PC-3 (cell line): ENCODE measurements at regions of chr22 and their contacts with region 1.

Region 1: DNA sequence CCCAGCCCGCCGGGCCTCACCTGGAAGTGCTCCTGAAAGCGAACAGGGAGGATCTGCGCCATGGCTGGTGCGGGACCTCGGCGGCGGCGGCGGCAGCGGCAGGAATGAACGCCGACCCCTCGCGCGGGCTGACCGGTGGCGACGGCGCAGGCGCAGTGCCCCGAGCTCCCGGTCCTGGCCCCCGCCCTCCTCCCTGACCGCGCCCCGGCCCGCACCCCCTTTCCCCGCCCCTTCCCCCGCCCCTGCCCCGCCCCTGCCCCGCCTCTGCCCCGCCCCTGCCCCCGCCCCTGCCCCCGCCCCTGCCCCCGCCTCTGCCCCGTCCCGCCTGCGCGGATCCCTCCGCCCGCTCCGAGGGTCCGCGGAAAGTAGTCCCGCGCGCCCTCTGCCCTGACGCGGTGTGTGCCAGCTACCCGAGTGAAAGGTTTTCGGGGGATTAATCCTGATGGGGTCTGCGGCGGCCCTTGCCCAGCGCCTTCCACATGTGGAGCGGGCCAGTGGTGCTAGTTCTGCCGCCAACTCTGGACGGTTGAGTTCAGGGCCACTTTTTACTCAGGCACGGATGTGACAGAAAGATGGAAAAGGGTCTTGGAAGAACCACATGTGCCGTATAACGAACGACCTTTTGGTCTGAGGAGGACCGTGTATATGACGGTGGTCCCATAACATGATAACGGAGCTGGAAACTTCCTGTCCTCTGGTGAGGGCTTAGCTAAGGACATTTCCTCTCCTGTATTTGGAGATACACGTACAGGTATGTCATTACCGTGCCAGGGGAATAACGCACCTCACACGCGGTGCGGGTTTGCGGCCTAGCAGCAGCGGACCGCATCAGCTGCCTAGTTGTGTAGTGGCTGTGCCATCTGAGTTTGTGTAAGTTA is at the start of gene CLTCL1:
- DNase-seq: peak; percentile 48
- ATAC-seq: peak; percentile 33
- H3K4me3 ChIP-seq: peak within 1 kb of the TSS; percentile 90
- H3K27ac ChIP-seq: no peak within 1 kb of the TSS; the same call in 1 of the 2 replicates
- H3K4me1 ChIP-seq: peaks cover 46% of the 10 kb centered on the region
- H3K27me3 ChIP-seq: no peaks in the 10 kb centered on the region
- CTCF ChIP-seq: no peak
- total RNA-seq, gene CLTCL1: 4.5 and 5.5 TPM in 2 replicates

Region 2: GRCh38 chr22:19271856-19272535 is 19.8 kb before region 1 on chr22:
- CTCF ChIA-PET with region 1: no interaction called
- POLR2A ChIA-PET with region 1: no interaction called
- intact Hi-C with region 1: loop called (anchors 2 kb)
- DNase-seq: peak; percentile 90
- ATAC-seq: peak; percentile 92
- H3K4me3 ChIP-seq: no peak overlapping the region
- H3K27ac ChIP-seq: peak overlapping the region; percentile 96
- H3K4me1 ChIP-seq: peaks cover 21% of the 10 kb centered on the region
- H3K27me3 ChIP-seq: no peaks in the 10 kb centered on the region
- CTCF ChIP-seq: no peak